ENCODE measurements at regions of chr5 and their contacts with region 1.

Region 1: GRCh38 chr5:91329283-91329682 is 53.8 kb downstream of the ARRDC3 start:
- DNase-seq: peak in 1 of 4 experiments; percentile 16
- ATAC-seq: no peak
- H3K4me3 ChIP-seq: no peak overlapping the region
- H3K27ac ChIP-seq: no peak overlapping the region
- H3K4me1 ChIP-seq: peaks cover 0 to 29% of the 10 kb centered on the region in 2 experiments; a peak in 3 of 5 replicates
- H3K27me3 ChIP-seq: no peaks in the 10 kb centered on the region
- CTCF ChIP-seq: no peak
- EP300 ChIP-seq: no peak
- POLR2A ChIP-seq: no peak
- RAD21 ChIP-seq: no peak

Region 2: DNA sequence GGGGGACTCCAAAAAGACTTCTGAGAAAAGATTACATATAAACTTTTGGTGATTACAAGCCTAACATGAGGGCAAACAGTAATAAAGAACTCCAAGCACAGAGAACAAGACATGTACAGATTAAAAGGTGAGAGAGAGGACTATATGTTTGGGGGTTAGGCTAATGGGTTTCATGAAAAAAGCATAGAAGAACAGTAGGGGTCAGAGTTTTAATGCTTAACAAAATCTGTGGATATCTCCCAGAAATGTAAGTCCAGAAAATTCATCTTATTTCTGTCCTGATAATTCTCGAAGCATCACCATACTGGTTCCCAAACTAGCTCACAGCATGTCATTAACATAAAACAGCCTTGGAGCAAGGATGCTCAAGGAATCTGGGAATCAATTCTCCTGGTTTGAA is 83.4 kb before region 1 on chr5:
- CTCF ChIA-PET with region 1: no interaction called
- POLR2A ChIA-PET with region 1: no interaction called
- in situ Hi-C with region 1: no loop called
- intact Hi-C with region 1: no loop called
- DNase-seq: no peak
- ATAC-seq: no peak
- H3K4me3 ChIP-seq: no peak overlapping the region
- H3K27ac ChIP-seq: no peak overlapping the region
- H3K4me1 ChIP-seq: no peaks in the 10 kb centered on the region
- H3K27me3 ChIP-seq: no peaks in the 10 kb centered on the region; a peak in 1 of 5 replicates
- CTCF ChIP-seq: peak in 1 of 3 experiments; percentile 37; a peak in 3 of 6 replicates
- EP300 ChIP-seq: no peak
- POLR2A ChIP-seq: no peak
- RAD21 ChIP-seq: peak; percentile 8 to 48; a peak in 2 of 4 replicates

Region 3: GRCh38 chr5:91257301-91257700 is 72.0 kb before region 1 on chr5:
- CTCF ChIA-PET with region 1: no interaction called
- POLR2A ChIA-PET with region 1: no interaction called
- in situ Hi-C with region 1: no loop called
- intact Hi-C with region 1: no loop called
- DNase-seq: no peak
- ATAC-seq: no peak
- H3K4me3 ChIP-seq: no peak overlapping the region
- H3K27ac ChIP-seq: no peak overlapping the region
- H3K4me1 ChIP-seq: no peaks in the 10 kb centered on the region
- H3K27me3 ChIP-seq: no peaks in the 10 kb centered on the region
- CTCF ChIP-seq: no peak
- EP300 ChIP-seq: no peak
- POLR2A ChIP-seq: no peak
- RAD21 ChIP-seq: no peak

Region 4: DNA sequence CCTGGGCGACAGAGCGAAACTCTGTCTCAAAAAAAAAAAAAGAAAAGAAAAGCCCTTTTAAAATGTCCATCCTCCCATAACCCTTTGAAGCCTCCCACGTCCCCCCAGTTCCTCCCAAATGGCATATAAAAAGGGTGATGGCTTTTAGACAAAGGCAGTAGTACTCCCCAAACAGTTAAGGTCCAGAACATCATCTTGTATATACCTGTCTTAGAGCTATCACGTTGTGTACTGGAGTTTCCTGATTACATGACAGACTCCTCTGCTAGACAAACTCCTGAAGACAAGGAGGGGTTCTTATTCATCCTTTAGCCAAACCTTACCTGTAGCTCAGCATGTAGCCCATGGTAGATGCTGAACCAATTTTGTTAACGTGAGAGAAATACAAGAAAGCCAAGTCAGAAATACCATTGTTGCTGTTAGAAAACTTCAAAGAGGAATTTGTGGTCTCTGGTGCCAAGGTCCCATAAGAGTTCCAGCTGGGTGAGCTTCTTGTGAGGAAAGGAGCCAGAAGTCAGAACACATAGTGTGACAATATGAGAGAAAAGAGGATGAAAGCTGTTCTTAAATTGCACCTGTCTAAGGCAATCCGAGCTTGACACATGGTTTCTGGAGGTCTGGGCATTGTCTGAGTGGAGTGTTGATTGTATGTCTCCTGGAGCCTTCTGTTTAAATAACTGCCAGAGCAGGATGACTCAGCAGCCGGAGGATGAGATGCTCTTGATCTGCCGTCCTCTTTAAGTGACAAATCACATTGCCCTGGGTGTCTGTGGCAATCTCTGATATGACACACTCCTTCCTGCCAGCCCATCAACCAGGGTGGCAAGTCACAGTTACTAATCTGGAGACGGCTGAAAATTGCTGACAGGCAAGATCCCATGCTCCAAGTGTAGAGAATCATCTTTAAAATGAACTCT is 15.3 kb before region 1 on chr5:
- CTCF ChIA-PET with region 1: no interaction called
- POLR2A ChIA-PET with region 1: interaction called, 6 read pairs
- in situ Hi-C with region 1: no loop called
- intact Hi-C with region 1: loop called (anchors 1 kb)
- DNase-seq: peak; percentile 70 to 93 (median 80)
- ATAC-seq: peak; percentile 95
- H3K4me3 ChIP-seq: no peak overlapping the region
- H3K27ac ChIP-seq: peak overlapping the region; percentile 63
- H3K4me1 ChIP-seq: peaks cover 4 to 20% of the 10 kb centered on the region in 2 experiments; a peak in 4 of 5 replicates
- H3K27me3 ChIP-seq: no peaks in the 10 kb centered on the region
- CTCF ChIP-seq: no peak
- EP300 ChIP-seq: peak; percentile 90
- POLR2A ChIP-seq: 0 out of 2 replicates have a peak, but pooled peaks have one; percentile 31
- RAD21 ChIP-seq: peak; percentile 11 to 15; a peak in 1 of 4 replicates

Measured in K562 (cell line).